ENCODE measurements at regions of chr12 and their contacts with region 1.

Region 1: DNA sequence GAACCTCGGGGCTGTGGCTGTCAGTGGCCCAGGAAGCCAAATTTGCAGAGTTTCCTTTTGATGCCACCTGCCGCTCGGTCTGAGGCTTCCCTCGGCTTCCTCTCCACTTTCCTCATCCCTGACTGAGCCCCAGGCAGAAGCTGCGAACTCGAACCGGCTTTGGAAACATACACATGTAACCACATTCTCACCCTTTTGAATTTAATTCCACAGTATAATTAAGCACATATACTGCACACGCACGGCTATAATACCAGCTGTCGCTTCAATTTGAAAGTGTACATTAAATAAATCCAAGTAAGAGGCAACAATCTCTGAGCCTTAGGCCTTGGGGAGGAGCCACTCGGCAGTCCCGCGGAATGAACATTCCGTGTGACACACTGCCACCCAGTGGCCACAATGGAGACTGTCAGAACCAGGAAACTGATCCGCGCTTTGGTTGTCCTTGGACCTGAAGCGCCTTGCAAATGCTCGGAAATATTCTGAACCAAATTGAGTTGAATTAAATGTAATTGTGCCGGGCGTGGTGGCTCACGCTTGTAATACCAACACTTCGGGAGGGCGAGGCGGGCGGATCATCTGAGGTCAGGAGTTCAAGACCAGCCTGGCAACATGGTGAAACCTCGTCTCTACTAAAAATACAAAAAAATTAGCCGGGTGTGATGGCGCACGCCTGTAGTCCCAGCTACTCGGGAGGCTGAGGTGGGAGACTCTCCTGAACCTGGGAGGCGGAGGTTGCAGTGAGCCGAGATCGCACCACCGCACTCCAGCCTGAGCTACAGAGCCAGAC is 117.9 kb upstream of the TMPO start:
- DNase-seq: peak; percentile 65 to 81 (median 78)
- ATAC-seq: peak; percentile 98
- H3K4me3 ChIP-seq: peak overlapping the region; percentile 76
- H3K4me3 Mint-ChIP-seq: peak overlapping the region; percentile 79 to 89 (median 86)
- H3K27ac ChIP-seq: peak overlapping the region; percentile 11
- H3K27ac Mint-ChIP-seq: peak overlapping the region; percentile 3 to 84 (median 58)
- H3K4me1 ChIP-seq: peaks cover 0 to 11% of the 10 kb centered on the region in 2 donors
- H3K4me1 Mint-ChIP-seq: peaks cover 11 to 31% (median 17%) of the 10 kb centered on the region in 7 donors
- H3K27me3 ChIP-seq: no peaks in the 10 kb centered on the region
- H3K27me3 Mint-ChIP-seq: peaks cover 0 to 7% (median 0%) of the 10 kb centered on the region in 5 donors

Region 2: DNA sequence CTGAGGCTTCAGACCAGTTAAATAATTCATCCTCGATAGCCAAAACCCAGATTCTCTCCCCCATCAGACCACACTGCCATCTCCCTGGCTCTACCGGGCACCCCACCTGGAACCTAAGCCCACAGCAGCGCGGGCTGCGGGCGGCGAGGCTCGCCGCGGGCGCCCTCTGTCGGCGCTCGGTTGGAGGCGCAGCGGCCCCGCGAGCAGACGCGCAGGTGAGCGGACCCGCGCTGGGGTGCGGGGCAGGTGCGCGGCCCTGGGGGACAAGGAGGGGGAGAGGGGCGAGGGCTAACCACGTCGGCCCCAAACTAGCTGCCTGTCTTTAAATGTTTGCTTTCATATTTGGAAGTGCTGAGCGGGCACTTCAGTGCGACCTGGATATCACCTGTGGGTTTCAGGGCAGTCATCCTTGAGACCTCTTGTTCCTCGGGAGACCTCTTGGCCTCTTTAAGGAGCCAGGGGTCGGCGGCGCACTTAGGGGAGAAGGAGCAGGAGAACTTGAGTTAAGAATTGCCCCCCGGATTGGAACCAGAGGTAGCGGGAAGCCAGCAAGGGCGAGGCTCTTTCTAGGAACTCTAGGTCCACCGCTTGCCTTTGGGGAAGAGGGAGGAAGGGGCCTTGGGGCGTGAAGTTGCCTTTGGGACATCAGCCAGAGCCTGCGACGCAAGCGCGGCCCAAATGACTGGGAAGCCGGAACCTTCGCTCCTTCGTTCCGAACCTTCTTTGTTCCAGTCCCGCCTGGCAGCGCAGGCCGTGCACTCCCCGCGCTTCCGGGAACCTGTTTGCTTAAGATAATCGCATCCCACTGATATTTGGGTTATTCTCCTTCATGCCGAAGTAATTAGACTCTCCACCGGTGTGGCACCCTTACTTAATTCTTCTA is 1411.8 kb before region 1 on chr12:
- CTCF ChIA-PET with region 1: no interaction called
- POLR2A ChIA-PET with region 1: no interaction called
- intact Hi-C with region 1: loop called (anchors 1 to 2 kb)
- DNase-seq: peak in 8 of 9 donors; percentile 23 to 61 (median 48)
- ATAC-seq: peak; percentile 89
- H3K4me3 ChIP-seq: peak overlapping the region; percentile 52
- H3K4me3 Mint-ChIP-seq: peak overlapping the region; percentile 60 to 90 (median 84)
- H3K27ac ChIP-seq: no peak overlapping the region
- H3K27ac Mint-ChIP-seq: peak overlapping the region in 1 of 9 donors; percentile 49
- H3K4me1 ChIP-seq: peaks cover 0 to 4% of the 10 kb centered on the region in 2 donors
- H3K4me1 Mint-ChIP-seq: peaks cover 7 to 9% (median 8%) of the 10 kb centered on the region in 7 donors
- H3K27me3 ChIP-seq: no peaks in the 10 kb centered on the region
- H3K27me3 Mint-ChIP-seq: peaks cover 13 to 47% (median 33%) of the 10 kb centered on the region in 5 donors

Region 3: DNA sequence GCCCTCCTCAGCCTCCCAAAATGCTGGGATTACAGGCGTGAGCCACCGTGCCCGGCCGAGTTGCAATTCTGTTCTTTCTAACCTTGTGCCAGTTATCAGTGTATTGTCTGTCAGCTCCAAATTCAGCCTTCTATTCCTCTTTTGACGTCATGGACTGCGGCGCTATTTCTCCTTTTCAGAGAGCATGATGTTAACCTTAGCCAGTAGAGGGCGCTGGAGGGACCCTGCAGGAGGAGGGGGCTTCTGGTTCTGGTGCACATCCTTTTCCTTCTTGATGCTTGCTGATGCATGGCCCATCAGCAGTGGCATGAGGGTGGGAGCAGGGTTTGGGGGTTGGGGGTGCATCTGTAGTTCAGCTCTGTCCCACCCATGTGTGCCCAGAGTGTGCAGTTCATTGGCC is 1114.2 kb before region 1 on chr12:
- CTCF ChIA-PET with region 1: no interaction called
- POLR2A ChIA-PET with region 1: no interaction called
- intact Hi-C with region 1: loop called in 1 of 2 experiments (anchors 10 kb)
- DNase-seq: no peak
- ATAC-seq: no peak
- H3K4me3 ChIP-seq: no peak overlapping the region
- H3K4me3 Mint-ChIP-seq: no peak overlapping the region
- H3K27ac ChIP-seq: no peak overlapping the region
- H3K27ac Mint-ChIP-seq: no peak overlapping the region
- H3K4me1 ChIP-seq: no peaks in the 10 kb centered on the region
- H3K4me1 Mint-ChIP-seq: no peaks in the 10 kb centered on the region
- H3K27me3 ChIP-seq: no peaks in the 10 kb centered on the region
- H3K27me3 Mint-ChIP-seq: peaks cover 2 to 25% (median 9%) of the 10 kb centered on the region in 5 donors

Region 4: DNA sequence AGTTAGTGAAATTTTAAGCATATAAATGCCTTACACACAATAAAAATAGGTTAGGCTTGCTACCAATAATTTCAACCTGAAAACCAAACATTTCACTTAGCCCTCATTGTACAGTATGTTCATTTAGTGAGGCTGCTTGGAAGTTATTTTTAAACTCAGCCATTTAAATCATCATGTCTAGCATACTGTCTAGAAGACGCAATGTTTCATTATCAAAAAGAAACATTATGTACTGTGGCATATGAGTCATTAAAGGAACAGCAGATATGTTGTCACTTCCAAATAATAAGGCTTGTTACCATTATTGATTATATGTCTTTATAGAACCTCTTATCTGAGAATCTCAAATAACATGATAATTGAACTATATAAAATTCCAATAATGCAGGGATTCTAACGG is 630.2 kb before region 1 on chr12:
- CTCF ChIA-PET with region 1: no interaction called
- POLR2A ChIA-PET with region 1: no interaction called
- intact Hi-C with region 1: loop called in 1 of 2 experiments (anchors 5 kb)
- DNase-seq: no peak
- ATAC-seq: no peak
- H3K4me3 ChIP-seq: no peak overlapping the region
- H3K4me3 Mint-ChIP-seq: no peak overlapping the region
- H3K27ac ChIP-seq: no peak overlapping the region
- H3K27ac Mint-ChIP-seq: no peak overlapping the region
- H3K4me1 ChIP-seq: no peaks in the 10 kb centered on the region
- H3K4me1 Mint-ChIP-seq: no peaks in the 10 kb centered on the region
- H3K27me3 ChIP-seq: no peaks in the 10 kb centered on the region
- H3K27me3 Mint-ChIP-seq: no peaks in the 10 kb centered on the region

Region 5: DNA sequence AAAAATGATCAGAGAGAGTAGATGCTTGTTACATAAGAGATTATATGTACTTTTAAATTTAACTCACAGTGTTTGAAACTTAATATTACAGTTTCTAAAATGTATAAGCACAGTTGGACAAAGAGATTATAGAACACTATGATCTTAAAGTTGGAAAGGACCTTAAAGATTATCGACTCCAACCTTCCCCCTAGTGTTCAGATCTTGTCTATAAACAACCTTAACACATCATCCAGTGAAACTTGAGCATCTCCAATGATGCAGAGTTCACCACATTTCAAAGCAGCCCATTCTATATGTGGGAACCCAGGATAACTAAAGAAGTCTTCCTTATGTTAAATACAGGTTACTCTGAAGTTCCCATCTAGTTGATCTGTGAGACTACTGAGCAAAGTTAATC is 454.1 kb before region 1 on chr12:
- CTCF ChIA-PET with region 1: no interaction called
- POLR2A ChIA-PET with region 1: no interaction called
- intact Hi-C with region 1: no loop called
- DNase-seq: no peak
- ATAC-seq: no peak
- H3K4me3 ChIP-seq: no peak overlapping the region
- H3K4me3 Mint-ChIP-seq: no peak overlapping the region
- H3K27ac ChIP-seq: no peak overlapping the region
- H3K27ac Mint-ChIP-seq: no peak overlapping the region
- H3K4me1 ChIP-seq: no peaks in the 10 kb centered on the region
- H3K4me1 Mint-ChIP-seq: no peaks in the 10 kb centered on the region
- H3K27me3 ChIP-seq: no peaks in the 10 kb centered on the region
- H3K27me3 Mint-ChIP-seq: peaks cover 0 to 7% (median 0%) of the 10 kb centered on the region in 5 donors

Region 6: DNA sequence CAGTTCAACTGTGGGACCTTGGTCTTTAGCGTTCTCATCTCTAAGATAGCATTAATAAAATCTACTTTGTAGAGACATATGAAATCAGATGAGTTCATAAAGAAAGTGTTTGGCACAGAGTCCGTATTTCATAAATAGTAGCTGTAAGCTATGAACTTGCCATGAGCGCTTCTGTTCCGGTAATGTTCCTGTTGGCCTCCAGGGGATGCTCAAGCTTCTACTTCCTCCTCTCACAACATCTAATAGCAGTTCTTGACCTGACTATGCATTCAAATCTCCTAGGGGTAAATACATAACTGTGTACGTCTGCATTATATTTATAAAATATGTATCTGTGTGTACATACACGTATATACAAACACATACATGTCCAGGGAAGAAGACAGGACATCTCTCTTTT is 170.3 kb before region 1 on chr12:
- CTCF ChIA-PET with region 1: no interaction called
- POLR2A ChIA-PET with region 1: no interaction called
- intact Hi-C with region 1: loop called in 1 of 2 experiments (anchors 2 kb)
- DNase-seq: no peak
- ATAC-seq: no peak
- H3K4me3 ChIP-seq: no peak overlapping the region
- H3K4me3 Mint-ChIP-seq: no peak overlapping the region
- H3K27ac ChIP-seq: no peak overlapping the region
- H3K27ac Mint-ChIP-seq: no peak overlapping the region
- H3K4me1 ChIP-seq: no peaks in the 10 kb centered on the region
- H3K4me1 Mint-ChIP-seq: no peaks in the 10 kb centered on the region
- H3K27me3 ChIP-seq: no peaks in the 10 kb centered on the region
- H3K27me3 Mint-ChIP-seq: peaks cover 1 to 22% (median 11%) of the 10 kb centered on the region in 5 donors

Region 7: GRCh38 chr12:98424726-98425401 is 27.4 kb after region 1 on chr12:
- CTCF ChIA-PET with region 1: no interaction called
- POLR2A ChIA-PET with region 1: interaction called, 3 read pairs
- intact Hi-C with region 1: loop called in 1 of 2 experiments (anchors 2 kb)
- DNase-seq: peak; percentile 13 to 52 (median 44)
- ATAC-seq: peak; percentile 83
- H3K4me3 ChIP-seq: no peak overlapping the region
- H3K4me3 Mint-ChIP-seq: no peak overlapping the region
- H3K27ac ChIP-seq: no peak overlapping the region
- H3K27ac Mint-ChIP-seq: no peak overlapping the region
- H3K4me1 ChIP-seq: no peaks in the 10 kb centered on the region
- H3K4me1 Mint-ChIP-seq: peaks cover 0 to 6% (median 5%) of the 10 kb centered on the region in 7 donors
- H3K27me3 ChIP-seq: no peaks in the 10 kb centered on the region
- H3K27me3 Mint-ChIP-seq: peaks cover 0 to 9% (median 0%) of the 10 kb centered on the region in 5 donors

Region 8: DNA sequence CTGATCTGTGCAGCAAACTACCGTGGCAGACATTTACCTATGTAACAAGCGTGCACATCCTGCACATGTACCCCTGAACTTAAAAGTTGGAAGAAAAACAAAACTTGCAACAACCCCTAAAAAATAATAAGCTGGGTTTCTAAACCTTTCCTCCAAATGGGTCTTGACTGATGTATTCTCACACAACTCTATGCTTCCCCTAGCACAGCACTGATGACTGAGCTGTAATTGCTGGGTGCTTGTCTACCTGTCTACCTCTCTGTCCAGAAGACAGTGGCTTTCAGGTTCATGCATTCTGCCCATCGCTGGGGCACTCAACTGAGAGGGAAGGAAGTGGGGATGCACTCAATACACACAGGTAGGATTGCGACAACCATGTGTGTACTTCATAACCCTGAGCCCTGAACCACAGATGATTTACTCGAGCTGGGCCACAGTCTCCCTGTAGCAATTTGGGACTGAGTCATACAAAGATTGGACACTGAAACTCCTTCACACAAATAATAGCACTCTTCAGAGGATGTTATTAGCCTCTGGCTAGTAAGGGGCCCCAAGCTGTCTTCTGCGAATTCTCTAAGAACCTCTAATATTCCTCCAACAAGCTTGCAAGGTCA is 73.1 kb after region 1 on chr12:
- CTCF ChIA-PET with region 1: no interaction called
- POLR2A ChIA-PET with region 1: no interaction called
- intact Hi-C with region 1: no loop called
- DNase-seq: no peak
- ATAC-seq: peak; percentile 53
- H3K4me3 ChIP-seq: no peak overlapping the region
- H3K4me3 Mint-ChIP-seq: no peak overlapping the region
- H3K27ac ChIP-seq: no peak overlapping the region
- H3K27ac Mint-ChIP-seq: no peak overlapping the region
- H3K4me1 ChIP-seq: no peaks in the 10 kb centered on the region
- H3K4me1 Mint-ChIP-seq: no peaks in the 10 kb centered on the region
- H3K27me3 ChIP-seq: no peaks in the 10 kb centered on the region
- H3K27me3 Mint-ChIP-seq: peaks cover 0 to 11% (median 3%) of the 10 kb centered on the region in 5 donors

Region 9: GRCh38 chr12:98516184-98516873 is 118.8 kb after region 1 on chr12:
- CTCF ChIA-PET with region 1: no interaction called
- POLR2A ChIA-PET with region 1: no interaction called
- intact Hi-C with region 1: loop called in 1 of 2 experiments (anchors 1 kb)
- DNase-seq: peak; percentile 53 to 90 (median 83)
- ATAC-seq: peak; percentile 79
- H3K4me3 ChIP-seq: peak overlapping the region; percentile 92
- H3K4me3 Mint-ChIP-seq: peak overlapping the region; percentile 95 to 100 (median 99)
- H3K27ac ChIP-seq: peak overlapping the region; percentile 95
- H3K27ac Mint-ChIP-seq: peak overlapping the region; percentile 91 to 99 (median 99)
- H3K4me1 ChIP-seq: peaks cover 10 to 26% of the 10 kb centered on the region in 2 donors
- H3K4me1 Mint-ChIP-seq: peaks cover 33 to 69% (median 52%) of the 10 kb centered on the region in 7 donors
- H3K27me3 ChIP-seq: no peaks in the 10 kb centered on the region
- H3K27me3 Mint-ChIP-seq: peaks cover 0 to 1% (median 0%) of the 10 kb centered on the region in 5 donors

Region 10: DNA sequence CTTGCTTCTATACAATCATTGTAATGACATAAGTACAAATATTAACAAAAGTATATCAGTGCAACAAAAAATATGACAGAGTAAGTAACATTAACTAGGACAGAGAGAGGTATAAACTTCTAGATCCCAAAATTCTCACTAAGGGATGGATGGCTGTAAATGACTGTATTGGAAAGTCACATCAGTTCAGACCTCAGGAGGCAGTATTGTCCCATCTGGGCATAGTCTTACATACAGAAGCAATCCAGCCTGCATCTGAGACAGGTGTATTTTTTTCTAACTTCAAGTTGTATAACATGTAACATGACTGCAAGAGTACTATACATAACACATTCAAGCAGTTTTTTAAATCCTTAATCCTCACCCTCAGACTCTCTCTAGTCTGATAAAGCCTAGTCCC is 1349.0 kb after region 1 on chr12:
- CTCF ChIA-PET with region 1: no interaction called
- POLR2A ChIA-PET with region 1: no interaction called
- intact Hi-C with region 1: no loop called
- DNase-seq: no peak
- ATAC-seq: no peak
- H3K4me3 ChIP-seq: no peak overlapping the region
- H3K4me3 Mint-ChIP-seq: no peak overlapping the region
- H3K27ac ChIP-seq: no peak overlapping the region
- H3K27ac Mint-ChIP-seq: no peak overlapping the region
- H3K4me1 ChIP-seq: no peaks in the 10 kb centered on the region
- H3K4me1 Mint-ChIP-seq: no peaks in the 10 kb centered on the region
- H3K27me3 ChIP-seq: no peaks in the 10 kb centered on the region
- H3K27me3 Mint-ChIP-seq: no peaks in the 10 kb centered on the region

Region 11: DNA sequence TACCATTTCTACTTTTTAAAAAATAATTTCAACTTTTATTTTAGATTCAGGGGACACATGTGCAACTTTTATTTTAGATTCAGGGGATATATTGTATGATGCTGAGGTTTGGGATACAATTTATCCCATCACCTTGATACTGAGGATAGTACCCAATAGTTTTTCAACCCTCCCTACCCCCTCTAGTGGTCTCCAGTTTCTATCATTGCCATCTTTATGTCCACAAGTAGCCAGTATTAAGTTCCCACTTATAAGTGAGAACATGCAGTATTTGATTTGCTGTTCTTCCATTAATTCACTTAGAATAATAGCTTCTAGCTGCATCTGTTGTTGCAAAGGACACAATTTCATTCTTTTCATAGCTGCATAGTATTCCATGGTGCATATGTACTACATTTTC is 1424.8 kb after region 1 on chr12:
- CTCF ChIA-PET with region 1: no interaction called
- POLR2A ChIA-PET with region 1: no interaction called
- intact Hi-C with region 1: no loop called
- DNase-seq: no peak
- ATAC-seq: no peak
- H3K4me3 ChIP-seq: no peak overlapping the region
- H3K4me3 Mint-ChIP-seq: no peak overlapping the region
- H3K27ac ChIP-seq: no peak overlapping the region
- H3K27ac Mint-ChIP-seq: no peak overlapping the region
- H3K4me1 ChIP-seq: no peaks in the 10 kb centered on the region
- H3K4me1 Mint-ChIP-seq: no peaks in the 10 kb centered on the region
- H3K27me3 ChIP-seq: no peaks in the 10 kb centered on the region
- H3K27me3 Mint-ChIP-seq: no peaks in the 10 kb centered on the region

Measured in naive thymus-derived CD4-positive, alpha-beta T cell (primary cell).